Activated T-helper 1 cell treated with anti-CD3 and anti-CD28 coated beads, Interleukin-12 subunit alpha, Interleukin-12 subunit beta, Interleukin-2, Interleukin-4 antibody, amounts not matched to agents 30 ng/mL and 10 ng/mL and 1 ng/mL, durations not matched to agents 14 hours and 24 hours and 36 hours (primary cell): ENCODE measurements at regions of chr6 and their contacts with region 1.

Region 1: DNA sequence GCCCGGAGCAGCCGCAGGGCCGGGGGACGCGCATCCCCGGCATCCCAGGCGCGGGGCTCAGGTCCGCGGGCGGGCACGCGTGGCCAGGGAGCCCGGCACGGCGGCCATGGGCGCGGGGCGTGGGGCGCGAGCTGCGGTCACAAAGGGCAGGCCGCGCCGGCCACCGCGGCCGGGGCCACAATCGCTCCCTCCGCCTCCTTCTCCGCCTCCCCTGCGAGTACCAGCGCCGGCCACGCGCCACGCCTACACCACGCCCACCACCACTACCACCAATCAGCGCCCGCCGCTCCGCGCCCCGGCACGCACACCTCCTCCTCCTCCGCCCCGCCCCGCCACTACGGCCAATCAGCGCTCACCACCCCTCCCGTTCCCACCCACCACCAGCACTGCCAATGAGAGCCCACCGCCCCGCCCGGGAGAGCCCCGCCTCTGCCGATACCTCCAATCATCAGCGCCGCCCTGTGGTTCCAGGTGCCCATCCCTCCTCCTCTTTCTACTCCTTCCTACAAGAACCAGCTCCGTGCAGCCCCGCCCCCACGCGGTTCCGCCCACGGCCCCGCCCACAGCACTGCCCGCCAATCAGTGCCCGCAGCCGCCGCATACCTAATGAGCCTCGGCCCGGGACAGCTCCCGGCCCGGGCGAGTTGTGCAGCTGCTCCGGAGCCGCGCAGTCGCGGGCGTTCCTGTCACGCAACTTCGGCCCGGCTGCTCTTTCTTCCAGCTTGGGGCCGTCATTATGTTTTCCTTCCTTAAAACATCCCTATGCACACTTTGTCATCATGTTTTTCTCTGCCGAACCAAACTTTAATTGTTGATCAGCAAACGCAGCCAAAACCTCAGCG is at the start of gene RPS6KA2:
- DNase-seq: peak; percentile 100
- H3K4me3 Mint-ChIP-seq: peak within 1 kb of the TSS; percentile 87
- H3K27ac Mint-ChIP-seq: peak within 1 kb of the TSS; percentile 79
- H3K4me1 Mint-ChIP-seq: peaks cover 29% of the 10 kb centered on the region
- H3K27me3 Mint-ChIP-seq: peaks cover 48% of the 10 kb centered on the region
- total RNA-seq, gene RPS6KA2: 2.0 and 2.7 TPM in 2 replicates

Region 2: DNA sequence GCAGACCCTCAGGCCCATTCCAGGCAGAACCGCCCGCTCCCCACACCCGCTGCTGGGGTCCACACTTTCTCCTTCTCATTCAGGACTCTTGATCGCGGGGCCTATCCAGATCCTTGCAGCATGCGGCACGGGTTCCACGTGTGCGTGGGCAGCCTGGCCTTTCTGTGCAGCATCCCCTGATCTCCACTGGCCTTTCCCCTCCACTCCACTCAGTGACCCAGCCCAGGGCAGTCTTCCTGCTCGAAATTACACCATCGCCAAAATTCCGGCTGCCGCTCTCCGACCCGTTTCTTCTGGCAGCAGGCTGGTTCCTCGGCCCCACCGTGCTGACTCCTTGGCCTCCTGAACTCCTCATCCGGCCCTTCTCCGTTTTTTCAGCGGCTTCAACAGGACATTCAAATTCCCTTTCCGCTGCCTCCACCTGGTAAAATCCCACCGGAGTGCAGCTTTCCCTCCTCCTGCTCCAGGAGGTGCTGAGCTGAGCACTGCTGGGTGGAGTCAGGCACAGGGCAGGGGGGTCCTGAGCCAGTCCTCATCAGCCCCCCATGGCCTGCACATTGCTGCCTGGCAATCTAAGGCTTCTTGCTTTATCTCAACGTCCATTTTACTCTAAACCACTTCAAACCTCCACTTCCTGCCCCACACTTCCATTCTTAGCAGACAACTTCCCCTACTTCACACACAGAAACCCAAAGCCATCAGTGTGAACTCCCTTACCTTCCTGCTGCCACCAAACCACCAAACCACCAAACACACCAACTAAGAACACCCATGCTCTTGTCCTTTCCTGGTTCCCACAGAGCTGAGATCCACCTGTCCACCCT is 293.9 kb before region 1 on chr6:
- intact Hi-C with region 1: loop called (anchors 2 kb)
- DNase-seq: peak; percentile 47
- H3K4me3 Mint-ChIP-seq: peak overlapping the region; percentile 38
- H3K27ac Mint-ChIP-seq: peak overlapping the region; percentile 19
- H3K4me1 Mint-ChIP-seq: peaks cover 33% of the 10 kb centered on the region
- H3K27me3 Mint-ChIP-seq: peaks cover 3% of the 10 kb centered on the region

Region 3: DNA sequence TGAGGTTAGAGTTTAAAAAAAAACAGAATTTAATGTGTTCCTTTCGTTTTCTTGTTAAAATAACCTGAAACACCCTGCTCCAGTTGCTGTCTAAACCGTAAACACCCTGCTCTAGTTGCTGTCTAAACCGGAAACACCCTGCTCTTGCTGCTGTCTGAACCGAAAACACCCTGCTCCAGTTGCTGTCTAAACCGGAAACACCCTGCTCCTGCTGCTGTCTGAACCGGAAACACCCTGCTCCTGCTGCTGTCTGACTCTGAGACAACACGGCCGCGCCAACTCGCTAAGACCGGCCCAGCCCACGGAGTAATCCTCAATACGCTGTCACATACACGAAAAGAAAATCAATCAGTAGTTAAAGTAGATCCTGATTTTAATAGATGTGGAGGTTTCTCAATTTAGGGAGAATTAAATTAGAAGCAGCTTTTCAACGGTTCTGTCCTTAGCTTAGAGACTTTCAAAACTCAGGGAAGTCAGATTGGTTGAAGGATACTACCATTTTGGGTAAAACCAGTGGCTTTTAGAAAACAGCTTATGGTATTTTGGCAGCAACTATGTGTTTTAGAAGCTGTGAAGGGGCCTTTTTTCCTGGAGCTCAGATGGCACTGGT is 139.1 kb before region 1 on chr6:
- intact Hi-C with region 1: loop called (anchors 1 kb)
- DNase-seq: peak; percentile 63
- H3K4me3 Mint-ChIP-seq: peak overlapping the region; percentile 51
- H3K27ac Mint-ChIP-seq: peak overlapping the region; percentile 88
- H3K4me1 Mint-ChIP-seq: peaks cover 14% of the 10 kb centered on the region
- H3K27me3 Mint-ChIP-seq: peaks cover 1% of the 10 kb centered on the region

Region 4: GRCh38 chr6:166588691-166589336 is 38.4 kb before region 1 on chr6:
- intact Hi-C with region 1: loop called (anchors 2 kb)
- DNase-seq: no peak
- H3K4me3 Mint-ChIP-seq: peak overlapping the region; percentile 12
- H3K27ac Mint-ChIP-seq: peak overlapping the region; percentile 23
- H3K4me1 Mint-ChIP-seq: peaks cover 15% of the 10 kb centered on the region
- H3K27me3 Mint-ChIP-seq: no peaks in the 10 kb centered on the region

Region 5: DNA sequence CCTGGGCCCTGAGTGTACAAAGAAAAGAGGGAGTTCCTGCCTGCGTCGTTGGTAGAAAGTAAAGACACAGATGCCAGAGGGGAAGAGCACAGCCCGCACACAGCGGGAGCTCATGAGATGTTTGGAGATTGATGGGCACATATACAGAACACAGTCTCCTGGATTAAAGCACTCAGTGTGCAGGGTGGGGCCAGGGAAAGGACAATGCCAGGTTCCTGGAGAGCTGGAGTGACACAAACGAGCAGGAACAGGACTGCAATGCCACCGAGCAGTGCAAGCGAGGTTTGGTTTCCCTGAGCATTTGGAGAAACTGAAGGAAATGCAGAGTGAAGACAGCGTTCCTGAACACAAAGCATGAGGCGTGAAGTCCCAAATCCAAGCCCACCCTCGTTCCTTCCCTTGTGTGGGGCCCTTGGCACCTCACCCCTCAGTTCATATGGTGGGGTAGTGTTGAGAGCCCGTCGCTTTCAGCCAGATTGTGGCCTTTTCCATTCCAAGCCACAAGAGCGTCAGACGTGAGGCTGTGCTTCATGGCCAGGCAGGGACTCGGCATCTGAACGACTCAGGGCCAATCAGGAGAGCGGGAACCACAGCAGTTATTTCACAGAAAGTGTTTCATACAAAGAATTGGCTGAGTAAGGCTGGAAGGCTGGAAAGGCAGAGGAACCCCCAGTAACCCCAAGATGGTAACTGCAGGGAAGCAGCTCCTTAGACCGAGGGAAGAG is 40.8 kb after region 1 on chr6:
- intact Hi-C with region 1: no loop called
- DNase-seq: no peak
- H3K4me3 Mint-ChIP-seq: no peak overlapping the region
- H3K27ac Mint-ChIP-seq: no peak overlapping the region
- H3K4me1 Mint-ChIP-seq: no peaks in the 10 kb centered on the region
- H3K27me3 Mint-ChIP-seq: peaks cover 10% of the 10 kb centered on the region

Region 6: GRCh38 chr6:166678426-166678825 is 51.2 kb after region 1 on chr6:
- intact Hi-C with region 1: no loop called
- DNase-seq: no peak
- H3K4me3 Mint-ChIP-seq: no peak overlapping the region
- H3K27ac Mint-ChIP-seq: no peak overlapping the region
- H3K4me1 Mint-ChIP-seq: no peaks in the 10 kb centered on the region
- H3K27me3 Mint-ChIP-seq: peaks cover 2% of the 10 kb centered on the region

Region 7: GRCh38 chr6:166999145-166999883 is 372.1 kb after region 1 on chr6 and contains the start of gene CEP43:
- intact Hi-C with region 1: loop called (anchors 1 kb)
- DNase-seq: peak; percentile 88
- H3K4me3 Mint-ChIP-seq: peak within 1 kb of the TSS; percentile 90
- H3K27ac Mint-ChIP-seq: peak within 1 kb of the TSS; percentile 80
- H3K4me1 Mint-ChIP-seq: peaks cover 31% of the 10 kb centered on the region
- H3K27me3 Mint-ChIP-seq: no peaks in the 10 kb centered on the region
- total RNA-seq, gene CEP43: 18.8 and 21.4 TPM in 2 replicates

Region 8: DNA sequence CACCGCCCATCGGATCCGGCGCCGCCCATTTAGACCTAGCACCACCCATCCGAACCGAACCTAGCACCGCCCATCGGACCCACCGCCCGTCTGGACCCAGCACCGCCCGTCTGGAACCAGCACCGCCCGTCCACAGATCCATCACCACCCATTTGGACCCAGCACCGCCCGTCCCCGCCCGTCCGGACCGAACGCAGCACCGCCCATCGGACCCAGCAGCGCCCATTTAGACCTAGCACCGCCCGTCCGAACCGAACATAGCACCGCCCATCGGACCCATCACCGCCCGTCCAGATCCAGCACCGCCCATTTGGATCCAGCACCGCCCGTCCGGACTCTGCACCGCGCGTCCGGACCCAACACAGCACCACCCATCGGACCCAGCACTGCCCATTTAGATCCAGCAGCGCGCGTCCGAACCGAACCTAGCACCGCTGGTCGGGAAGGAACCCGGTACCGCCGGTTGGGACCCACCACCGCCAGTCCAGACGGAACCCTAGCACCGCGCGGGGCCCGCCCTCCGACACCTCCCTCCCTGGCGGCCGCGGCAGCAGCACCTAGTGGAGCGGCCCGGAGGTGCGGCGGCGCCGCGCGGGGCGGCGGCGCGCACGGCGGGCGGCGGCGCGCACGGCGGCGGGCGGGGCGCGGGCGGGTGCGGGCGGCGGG is 1199.1 kb after region 1 on chr6:
- intact Hi-C with region 1: loop called (anchors 2 kb)
- DNase-seq: peak; percentile 65
- H3K4me3 Mint-ChIP-seq: peak overlapping the region; percentile 89
- H3K27ac Mint-ChIP-seq: peak overlapping the region; percentile 61
- H3K4me1 Mint-ChIP-seq: peaks cover 52% of the 10 kb centered on the region
- H3K27me3 Mint-ChIP-seq: peaks cover 67% of the 10 kb centered on the region